Left cardiac atrium (tissue), 4 donors: ENCODE measurements at regions of chr2 and their contacts with region 1.

Region 1: GRCh38 chr2:127415593-127416505 is 2.4 kb upstream of the PROC start:
- DNase-seq: peak; percentile 63
- ATAC-seq: peak; percentile 75 to 76

Region 2: DNA sequence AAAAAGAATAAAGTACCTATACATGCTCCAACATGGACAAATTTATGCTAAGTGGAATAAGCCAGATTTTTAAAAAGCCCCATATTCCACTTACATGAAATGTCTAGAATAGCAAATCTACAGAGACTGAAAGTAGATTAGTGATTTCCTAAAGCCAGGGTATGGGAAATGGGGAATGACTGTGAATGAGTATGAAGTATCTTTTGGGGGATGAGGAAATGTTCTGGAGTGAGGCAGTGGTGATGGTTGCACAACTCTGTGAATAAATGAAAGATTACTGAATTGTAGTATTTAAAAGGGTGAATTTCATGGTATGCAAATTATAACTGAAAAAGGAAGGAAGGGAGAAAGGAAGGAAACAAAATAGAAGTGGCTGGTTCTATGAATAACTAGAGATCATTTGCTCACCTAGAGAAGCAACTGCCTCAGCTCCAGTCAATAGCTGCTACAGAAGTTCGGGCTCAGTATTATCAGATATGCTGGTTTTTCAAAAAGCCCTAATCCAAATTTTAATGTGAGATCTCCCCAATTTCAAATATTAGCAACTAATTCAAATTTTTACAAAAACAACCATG is 67.3 kb before region 1 on chr2:
- intact Hi-C with region 1: loop called in 1 of 2 experiments (anchors 5 kb)
- DNase-seq: no peak
- ATAC-seq: peak in 1 of 2 donors; percentile 68